Upper lobe of right lung (tissue), 1 donor: ENCODE measurements at regions of chr9 and their contacts with region 1.

Region 1: GRCh38 chr9:32180597-32180996 is 203.8 kb upstream of the ACO1 start:
- DNase-seq: no peak
- ATAC-seq: peak; percentile 26
- H3K4me3 ChIP-seq: no peak overlapping the region
- H3K27ac ChIP-seq: no peak overlapping the region
- H3K4me1 ChIP-seq: no peaks in the 10 kb centered on the region
- H3K27me3 ChIP-seq: no peaks in the 10 kb centered on the region
- CTCF ChIP-seq: no peak

Region 2: DNA sequence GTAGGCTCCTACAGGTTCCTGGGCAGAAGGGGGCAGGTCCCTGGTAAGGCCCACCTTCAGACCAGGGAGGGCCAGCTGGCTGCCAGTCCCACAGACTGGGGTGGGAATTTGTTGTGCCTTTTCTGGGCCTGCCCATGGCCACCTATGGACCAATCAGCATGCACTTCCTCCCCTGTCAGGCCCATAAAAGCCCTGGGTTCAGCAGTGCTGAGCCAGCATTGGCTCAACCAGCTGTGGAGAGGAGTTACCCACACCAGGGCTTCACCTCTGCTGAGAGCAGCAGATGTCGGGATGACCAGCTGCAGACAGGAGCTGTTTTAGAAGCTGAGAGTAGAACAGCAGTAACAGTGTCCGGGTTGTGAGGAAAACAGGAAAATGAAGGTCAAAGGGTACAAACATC is 169.5 kb before region 1 on chr9:
- intact Hi-C with region 1: no loop called
- DNase-seq: peak; percentile 48
- ATAC-seq: peak; percentile 25
- H3K4me3 ChIP-seq: no peak overlapping the region
- H3K27ac ChIP-seq: no peak overlapping the region
- H3K4me1 ChIP-seq: no peaks in the 10 kb centered on the region
- H3K27me3 ChIP-seq: no peaks in the 10 kb centered on the region
- CTCF ChIP-seq: no peak

Region 3: DNA sequence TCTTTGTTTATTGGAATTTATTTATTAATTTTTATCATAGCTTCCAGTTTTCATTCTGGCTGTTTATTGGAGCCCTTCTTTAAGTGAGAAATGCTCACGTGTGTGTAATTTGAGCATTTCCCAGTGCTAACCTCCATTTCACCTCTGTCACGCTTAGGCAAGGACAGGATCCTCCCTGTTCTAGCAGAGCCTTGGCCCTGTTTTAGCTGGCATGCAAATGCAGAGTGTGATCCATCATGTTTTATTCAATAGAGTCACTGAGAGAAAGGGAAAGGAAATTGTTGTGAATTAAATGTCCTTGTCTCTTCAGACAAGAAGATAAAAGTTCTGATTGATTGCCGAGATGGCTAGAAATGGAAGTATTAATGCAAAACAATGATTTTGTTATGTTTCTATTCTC is 66.6 kb after region 1 on chr9:
- intact Hi-C with region 1: loop called (anchors 10 kb)
- DNase-seq: no peak
- ATAC-seq: no peak
- H3K4me3 ChIP-seq: no peak overlapping the region
- H3K27ac ChIP-seq: no peak overlapping the region
- H3K4me1 ChIP-seq: no peaks in the 10 kb centered on the region
- H3K27me3 ChIP-seq: no peaks in the 10 kb centered on the region
- CTCF ChIP-seq: no peak